CD8-positive, alpha-beta memory T cell (primary cell): ENCODE measurements at regions of chr20 and their contacts with region 1.

Region 1: DNA sequence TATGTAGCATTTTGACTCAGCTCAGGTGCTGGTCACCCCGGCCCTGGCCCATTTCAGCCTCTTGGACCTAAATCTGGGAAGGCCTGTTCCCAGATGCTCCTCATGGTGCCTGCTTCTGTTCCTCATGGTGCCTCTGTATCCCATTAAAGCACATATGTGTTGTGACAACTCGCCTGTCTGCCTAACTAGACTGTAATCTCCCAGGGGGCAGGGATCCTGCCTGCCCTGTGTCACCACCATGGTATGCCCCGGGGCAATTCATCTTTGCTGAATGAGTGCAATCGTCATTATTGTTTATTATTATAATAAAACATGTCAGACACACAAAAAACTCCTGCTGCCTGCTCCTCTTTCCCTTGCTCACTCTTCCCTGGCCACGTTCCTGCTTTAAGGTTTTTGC is 62.0 kb downstream of the ZFP64 start:
- DNase-seq: no peak
- H3K4me3 ChIP-seq: no peak overlapping the region
- H3K4me3 Mint-ChIP-seq: no peak overlapping the region
- H3K27ac ChIP-seq: no peak overlapping the region
- H3K27ac Mint-ChIP-seq: no peak overlapping the region
- H3K4me1 ChIP-seq: no peaks in the 10 kb centered on the region
- H3K4me1 Mint-ChIP-seq: peaks cover 0 to 5% (median 3%) of the 10 kb centered on the region in 3 donors
- H3K27me3 ChIP-seq: no peaks in the 10 kb centered on the region
- H3K27me3 Mint-ChIP-seq: no peaks in the 10 kb centered on the region

Region 2: GRCh38 chr20:52047811-52048764 is 81.5 kb before region 1 on chr20:
- CTCF ChIA-PET with region 1: no interaction called
- POLR2A ChIA-PET with region 1: no interaction called
- DNase-seq: peak in 2 of 5 donors; percentile 5 to 46
- H3K4me3 ChIP-seq: no peak overlapping the region
- H3K4me3 Mint-ChIP-seq: peak overlapping the region; percentile 13 to 65 (median 35)
- H3K27ac ChIP-seq: no peak overlapping the region
- H3K27ac Mint-ChIP-seq: peak overlapping the region; percentile 34 to 80 (median 54)
- H3K4me1 ChIP-seq: peaks cover 12% of the 10 kb centered on the region
- H3K4me1 Mint-ChIP-seq: peaks cover 19 to 21% (median 20%) of the 10 kb centered on the region in 3 donors
- H3K27me3 ChIP-seq: no peaks in the 10 kb centered on the region
- H3K27me3 Mint-ChIP-seq: peaks cover 0 to 1% of the 10 kb centered on the region in 2 donors

Region 3: GRCh38 chr20:52145587-52145986 is 16.0 kb after region 1 on chr20:
- CTCF ChIA-PET with region 1: interaction called, 13 read pairs
- POLR2A ChIA-PET with region 1: no interaction called
- DNase-seq: no peak
- H3K4me3 ChIP-seq: no peak overlapping the region
- H3K4me3 Mint-ChIP-seq: no peak overlapping the region
- H3K27ac ChIP-seq: no peak overlapping the region
- H3K27ac Mint-ChIP-seq: no peak overlapping the region
- H3K4me1 ChIP-seq: no peaks in the 10 kb centered on the region
- H3K4me1 Mint-ChIP-seq: peaks cover 0 to 6% (median 0%) of the 10 kb centered on the region in 3 donors
- H3K27me3 ChIP-seq: no peaks in the 10 kb centered on the region
- H3K27me3 Mint-ChIP-seq: no peaks in the 10 kb centered on the region

Region 4: GRCh38 chr20:52150440-52151258 is 21.0 kb after region 1 on chr20:
- CTCF ChIA-PET with region 1: interaction called, 13 read pairs
- POLR2A ChIA-PET with region 1: no interaction called
- DNase-seq: peak in 1 of 5 donors; percentile 5
- H3K4me3 ChIP-seq: no peak overlapping the region
- H3K4me3 Mint-ChIP-seq: no peak overlapping the region
- H3K27ac ChIP-seq: no peak overlapping the region
- H3K27ac Mint-ChIP-seq: no peak overlapping the region
- H3K4me1 ChIP-seq: no peaks in the 10 kb centered on the region
- H3K4me1 Mint-ChIP-seq: peaks cover 0 to 5% (median 0%) of the 10 kb centered on the region in 3 donors
- H3K27me3 ChIP-seq: no peaks in the 10 kb centered on the region
- H3K27me3 Mint-ChIP-seq: no peaks in the 10 kb centered on the region